Ascending aorta (tissue), 2 donors: ENCODE measurements at regions of chr1 and their contacts with region 1.

Region 1: GRCh38 chr1:46718727-46719622 is at the start of gene EFCAB14:
- DNase-seq: peak; percentile 83 to 97
- H3K4me3 ChIP-seq: peak within 1 kb of the TSS; percentile 97 to 99
- H3K27ac ChIP-seq: peak within 1 kb of the TSS; percentile 78 to 93
- H3K4me1 ChIP-seq: peaks cover 12 to 22% of the 10 kb centered on the region in 2 donors
- H3K27me3 ChIP-seq: no peaks in the 10 kb centered on the region
- CTCF ChIP-seq: no peak
- total RNA-seq, gene EFCAB14: 99.8 TPM

Region 2: DNA sequence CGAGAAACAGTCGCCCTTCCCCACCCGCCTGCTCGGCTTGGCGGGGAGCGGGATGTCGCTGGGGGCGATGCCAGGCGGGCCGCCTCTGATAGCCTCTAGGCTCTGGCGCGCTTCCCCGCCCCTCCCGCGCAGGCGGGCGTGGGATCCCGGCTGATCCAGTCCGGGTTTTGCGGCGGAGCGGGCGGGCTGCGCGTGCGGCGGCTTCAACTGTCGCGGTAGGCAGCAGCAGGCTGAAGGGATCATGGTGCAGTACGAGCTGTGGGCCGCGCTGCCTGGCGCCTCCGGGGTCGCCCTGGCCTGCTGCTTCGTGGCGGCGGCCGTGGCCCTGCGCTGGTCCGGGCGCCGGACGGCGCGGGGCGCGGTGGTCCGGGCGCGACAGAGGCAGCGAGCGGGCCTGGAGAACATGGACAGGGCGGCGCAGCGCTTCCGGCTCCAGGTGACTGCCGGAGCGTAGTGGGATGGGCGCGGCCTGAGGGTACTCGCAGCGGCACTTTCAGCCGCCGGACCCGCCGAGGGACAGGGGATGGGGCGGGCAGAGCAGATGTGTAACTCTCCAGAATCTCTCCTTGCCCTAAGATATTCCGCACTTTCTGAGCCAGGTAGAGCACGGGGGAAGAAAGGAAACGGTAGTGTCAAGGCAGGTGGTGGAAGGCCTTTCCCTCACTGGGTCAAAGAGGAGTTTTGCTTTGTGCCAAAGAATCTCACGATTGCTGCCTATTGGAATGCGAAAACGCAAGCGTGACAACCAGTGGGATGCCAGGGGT is 324.7 kb before region 1 on chr1 and contains the start of gene FAAH:
- intact Hi-C with region 1: loop called (anchors 2 kb)
- DNase-seq: peak in 1 of 2 donors; percentile 74
- H3K4me3 ChIP-seq: peak within 1 kb of the TSS; percentile 60 to 69
- H3K27ac ChIP-seq: no peak within 1 kb of the TSS
- H3K4me1 ChIP-seq: peaks cover 0 to 6% of the 10 kb centered on the region in 2 donors
- H3K27me3 ChIP-seq: no peaks in the 10 kb centered on the region
- CTCF ChIP-seq: no peak
- total RNA-seq, gene FAAH: 6.0 TPM

Region 3: DNA sequence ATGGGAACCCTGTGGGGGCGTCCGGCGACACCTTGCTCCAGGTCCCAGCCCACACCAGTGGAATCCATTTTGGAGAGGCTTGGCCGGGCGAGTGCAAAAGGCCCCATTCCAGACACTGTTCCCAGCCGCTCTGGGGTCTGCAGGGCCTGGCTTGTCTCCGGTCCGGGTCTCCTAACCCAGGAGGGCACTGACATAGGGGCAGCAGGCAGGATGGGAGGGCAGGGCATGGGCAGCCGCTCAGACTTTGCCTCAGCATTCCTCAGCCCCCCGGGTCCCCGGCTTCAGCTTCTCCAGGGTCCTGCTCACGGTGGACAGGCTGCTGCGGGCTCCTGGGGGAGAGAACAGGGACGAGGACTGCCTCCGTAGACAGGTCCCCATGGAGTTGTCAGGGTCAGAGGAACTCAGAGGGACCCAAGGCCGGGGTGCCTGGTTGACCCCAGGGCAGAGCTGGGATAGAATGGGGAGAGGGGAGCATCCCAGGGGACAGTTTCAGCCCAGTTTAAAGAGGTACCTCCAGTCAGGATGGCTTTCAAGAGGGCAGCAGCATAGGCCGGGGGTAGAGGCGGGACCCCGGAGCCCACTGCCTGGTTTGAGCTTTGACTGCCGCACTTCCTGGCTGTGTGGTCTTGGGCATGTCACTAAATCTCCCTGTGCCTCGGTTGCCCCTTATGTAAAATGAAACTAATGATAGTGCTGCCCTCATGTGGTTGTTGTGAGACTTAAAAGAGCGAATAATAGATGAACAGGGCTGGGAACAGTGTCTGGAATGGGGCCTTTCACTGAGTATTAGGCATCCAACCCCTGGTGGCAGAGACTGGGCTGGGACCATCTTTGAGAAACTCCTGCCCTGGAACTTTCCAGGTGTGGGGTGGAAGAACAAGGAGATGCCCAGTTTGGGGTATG is 171.2 kb before region 1 on chr1:
- intact Hi-C with region 1: no loop called
- DNase-seq: no peak
- H3K4me3 ChIP-seq: no peak overlapping the region
- H3K27ac ChIP-seq: no peak overlapping the region
- H3K4me1 ChIP-seq: peaks cover 0 to 5% of the 10 kb centered on the region in 2 donors
- H3K27me3 ChIP-seq: peaks cover 6% of the 10 kb centered on the region
- CTCF ChIP-seq: peak in 1 of 3 experiments; percentile 45

Region 4: GRCh38 chr1:46603858-46604549 is 115.0 kb before region 1 on chr1 and contains the start of gene MKNK1:
- intact Hi-C with region 1: loop called (anchors 1 kb)
- DNase-seq: peak; percentile 87 to 98
- H3K4me3 ChIP-seq: peak within 1 kb of the TSS; percentile 89 to 90
- H3K27ac ChIP-seq: peak within 1 kb of the TSS; percentile 82 to 83
- H3K4me1 ChIP-seq: peaks cover 10 to 38% of the 10 kb centered on the region in 2 donors
- H3K27me3 ChIP-seq: no peaks in the 10 kb centered on the region
- CTCF ChIP-seq: peak in 2 of 3 experiments; percentile 14 to 17
- total RNA-seq, gene MKNK1: 47.8 TPM

Region 5: GRCh38 chr1:46667782-46668760 is 50.9 kb before region 1 on chr1 and contains the start of gene ATPAF1:
- intact Hi-C with region 1: loop called (anchors 1 kb)
- DNase-seq: peak; percentile 31 to 90
- H3K4me3 ChIP-seq: peak within 1 kb of the TSS; percentile 96 to 97
- H3K27ac ChIP-seq: peak within 1 kb of the TSS; percentile 80 to 89
- H3K4me1 ChIP-seq: peaks cover 11 to 19% of the 10 kb centered on the region in 2 donors
- H3K27me3 ChIP-seq: no peaks in the 10 kb centered on the region
- CTCF ChIP-seq: no peak
- total RNA-seq, gene ATPAF1: 23.6 TPM

Region 6: GRCh38 chr1:46691997-46692790 is 26.8 kb before region 1 on chr1:
- intact Hi-C with region 1: no loop called
- DNase-seq: no peak
- H3K4me3 ChIP-seq: no peak overlapping the region
- H3K27ac ChIP-seq: no peak overlapping the region
- H3K4me1 ChIP-seq: peaks cover 0 to 2% of the 10 kb centered on the region in 2 donors
- H3K27me3 ChIP-seq: no peaks in the 10 kb centered on the region
- CTCF ChIP-seq: no peak